Right lobe of liver (tissue), 6 donors: ENCODE measurements at regions of chr12 and their contacts with region 1.

Region 1: GRCh38 chr12:19082365-19082911 is 47.1 kb upstream of the PLEKHA5 start:
- DNase-seq: no peak
- ATAC-seq: no peak
- H3K4me3 ChIP-seq: no peak overlapping the region
- H3K27ac ChIP-seq: no peak overlapping the region
- H3K4me1 ChIP-seq: no peaks in the 10 kb centered on the region
- H3K27me3 ChIP-seq: no peaks in the 10 kb centered on the region
- CTCF ChIP-seq: no peak
- POLR2A ChIP-seq: no peak

Region 2: DNA sequence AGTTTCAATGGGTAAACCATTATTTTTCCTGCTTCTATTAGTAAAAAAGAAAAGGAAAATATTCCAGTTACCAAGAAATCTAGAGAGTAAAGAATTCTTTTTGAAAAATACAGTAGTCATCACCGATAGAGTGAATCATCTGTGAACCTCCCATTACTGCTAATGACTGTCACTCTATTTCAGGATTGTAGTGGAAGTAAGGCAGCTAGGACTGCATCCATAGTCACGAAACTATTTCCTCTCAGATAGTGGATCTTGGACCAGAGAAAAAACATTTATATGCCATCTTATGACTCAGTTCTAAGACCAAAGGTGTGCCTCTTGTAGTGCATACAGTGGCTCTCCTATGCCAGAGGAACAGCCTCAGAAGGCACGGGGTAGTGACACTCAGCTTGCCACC is 126.8 kb before region 1 on chr12:
- intact Hi-C with region 1: no loop called
- DNase-seq: no peak
- ATAC-seq: no peak
- H3K4me3 ChIP-seq: no peak overlapping the region
- H3K27ac ChIP-seq: no peak overlapping the region
- H3K4me1 ChIP-seq: no peaks in the 10 kb centered on the region
- H3K27me3 ChIP-seq: no peaks in the 10 kb centered on the region
- CTCF ChIP-seq: no peak
- POLR2A ChIP-seq: no peak

Region 3: DNA sequence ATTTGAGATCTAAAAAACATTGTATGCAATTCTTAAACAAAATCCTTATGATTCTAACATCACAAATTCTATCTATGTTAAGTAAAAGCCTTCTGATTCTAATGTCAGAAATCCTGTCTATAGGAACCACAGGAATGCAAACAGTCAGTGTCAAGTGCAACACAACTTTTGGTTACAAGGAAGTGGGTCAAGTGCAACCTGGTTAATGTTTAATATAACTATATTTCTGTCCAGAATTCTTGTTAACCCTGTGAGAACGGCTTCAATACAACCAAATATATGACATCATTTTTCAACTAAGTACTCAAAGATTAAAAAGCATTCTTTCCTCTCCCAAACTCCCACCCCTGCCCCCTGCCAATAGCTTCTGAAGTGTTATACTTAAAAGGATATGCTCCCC is 60.8 kb before region 1 on chr12:
- intact Hi-C with region 1: no loop called
- DNase-seq: no peak
- ATAC-seq: peak; percentile 73 to 91 (median 87)
- H3K4me3 ChIP-seq: no peak overlapping the region
- H3K27ac ChIP-seq: no peak overlapping the region
- H3K4me1 ChIP-seq: peaks cover 0 to 32% (median 7%) of the 10 kb centered on the region in 4 donors
- H3K27me3 ChIP-seq: no peaks in the 10 kb centered on the region
- CTCF ChIP-seq: no peak
- POLR2A ChIP-seq: no peak

Region 4: GRCh38 chr12:19158923-19159322 is 76.5 kb after region 1 on chr12:
- intact Hi-C with region 1: loop called in 1 of 2 experiments (anchors 5 kb)
- DNase-seq: no peak
- ATAC-seq: peak in 1 of 4 donors; percentile 18
- H3K4me3 ChIP-seq: no peak overlapping the region
- H3K27ac ChIP-seq: no peak overlapping the region
- H3K4me1 ChIP-seq: peaks cover 0 to 15% (median 5%) of the 10 kb centered on the region in 4 donors
- H3K27me3 ChIP-seq: no peaks in the 10 kb centered on the region
- CTCF ChIP-seq: no peak
- POLR2A ChIP-seq: no peak